ENCODE measurements at regions of chr3 and their contacts with region 1.

Region 1: GRCh38 chr3:144963810-144964209 is 992.2 kb downstream of the DIPK2A start:
- DNase-seq: no peak
- H3K4me3 Mint-ChIP-seq: no peak overlapping the region
- H3K27ac Mint-ChIP-seq: no peak overlapping the region
- H3K4me1 Mint-ChIP-seq: no peaks in the 10 kb centered on the region
- H3K27me3 Mint-ChIP-seq: no peaks in the 10 kb centered on the region
- CTCF ChIP-seq: no peak

Region 2: GRCh38 chr3:144437989-144438388 is 525.8 kb before region 1 on chr3:
- CTCF ChIA-PET with region 1: no interaction called
- intact Hi-C with region 1: loop called (anchors 5 kb)
- DNase-seq: no peak
- H3K4me3 Mint-ChIP-seq: no peak overlapping the region
- H3K27ac Mint-ChIP-seq: no peak overlapping the region
- H3K4me1 Mint-ChIP-seq: peaks cover 4% of the 10 kb centered on the region
- H3K27me3 Mint-ChIP-seq: no peaks in the 10 kb centered on the region
- CTCF ChIP-seq: no peak

Region 3: DNA sequence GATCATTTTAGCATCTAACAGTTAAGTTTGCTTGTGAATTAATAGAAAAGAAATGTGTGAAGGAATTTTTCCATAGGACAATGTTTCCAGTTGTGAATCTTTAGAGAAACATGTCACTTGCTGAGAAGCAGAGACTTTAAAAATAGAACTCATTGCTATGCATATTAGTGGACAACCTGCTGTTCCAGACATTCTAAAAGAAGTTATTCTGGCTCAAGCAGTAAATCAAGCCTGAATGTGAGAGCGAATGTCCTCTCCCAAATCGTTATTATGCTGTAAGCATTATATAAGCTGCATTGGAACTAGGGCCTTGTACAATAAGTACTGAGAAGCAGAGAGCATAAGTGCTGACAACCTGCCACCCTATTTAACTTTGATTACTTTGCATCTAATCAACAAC is 206.3 kb after region 1 on chr3:
- CTCF ChIA-PET with region 1: no interaction called
- intact Hi-C with region 1: loop called (anchors 1 kb)
- DNase-seq: no peak
- H3K4me3 Mint-ChIP-seq: no peak overlapping the region
- H3K27ac Mint-ChIP-seq: no peak overlapping the region
- H3K4me1 Mint-ChIP-seq: no peaks in the 10 kb centered on the region
- H3K27me3 Mint-ChIP-seq: no peaks in the 10 kb centered on the region
- CTCF ChIP-seq: no peak